ENCODE measurements at regions of chr6 and their contacts with region 1.

Region 1: DNA sequence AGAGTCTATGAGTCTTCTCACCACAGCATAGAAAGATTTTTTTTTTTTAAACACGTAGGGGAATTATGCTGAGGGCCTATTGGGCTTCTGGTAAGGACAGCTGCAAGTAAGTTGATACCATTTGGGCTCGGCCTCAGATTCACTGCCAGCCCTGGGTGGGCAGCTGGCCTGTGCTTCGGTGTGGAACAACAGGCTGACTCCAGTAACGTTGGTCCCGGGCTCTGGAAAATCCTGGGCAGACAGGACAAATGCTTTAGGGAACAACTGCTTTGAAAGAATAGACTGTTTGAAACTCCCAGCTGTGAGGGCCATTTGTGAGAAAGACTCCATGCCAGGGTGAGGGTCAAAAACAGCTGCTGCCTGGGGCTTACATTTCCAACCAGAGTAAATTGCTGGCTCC is 366.5 kb downstream of the QKI start:
- DNase-seq: no peak
- ATAC-seq: no peak
- H3K4me3 ChIP-seq: no peak overlapping the region
- H3K27ac ChIP-seq: no peak overlapping the region
- H3K4me1 ChIP-seq: peaks cover 9% of the 10 kb centered on the region
- H3K27me3 ChIP-seq: no peaks in the 10 kb centered on the region
- CTCF ChIP-seq: no peak
- EP300 ChIP-seq: no peak
- POLR2A ChIP-seq: no peak
- RAD21 ChIP-seq: no peak

Region 2: DNA sequence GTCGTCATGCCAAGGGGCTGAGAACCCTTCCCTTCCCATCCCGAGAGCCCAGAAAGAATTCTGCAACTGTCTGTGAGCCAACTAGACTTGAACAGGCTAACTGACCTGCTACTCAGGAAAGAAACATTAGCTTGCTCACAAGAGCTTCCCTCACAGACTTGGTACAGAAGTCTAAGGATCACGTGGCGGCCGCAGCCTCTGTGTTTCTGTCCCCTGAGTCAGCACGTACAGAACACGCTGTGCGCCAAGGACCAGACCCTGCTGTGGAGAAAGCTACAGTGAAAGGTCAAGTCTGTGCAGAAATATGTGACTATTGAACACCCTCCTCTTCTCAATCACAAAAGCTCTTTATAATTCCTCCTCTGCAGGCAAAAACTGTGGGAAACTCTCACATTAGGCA is 517.8 kb before region 1 on chr6:
- CTCF ChIA-PET with region 1: no interaction called
- POLR2A ChIA-PET with region 1: no interaction called
- RAD21 ChIA-PET with region 1: no interaction called
- SMC1A ChIA-PET with region 1: no interaction called
- in situ Hi-C with region 1: no loop called
- intact Hi-C with region 1: no loop called
- DNase-seq: no peak
- ATAC-seq: no peak
- H3K4me3 ChIP-seq: no peak overlapping the region
- H3K27ac ChIP-seq: no peak overlapping the region
- H3K4me1 ChIP-seq: no peaks in the 10 kb centered on the region
- H3K27me3 ChIP-seq: peaks cover 1 to 5% of the 10 kb centered on the region in 2 experiments; a peak in 1 of 4 replicates
- CTCF ChIP-seq: no peak
- EP300 ChIP-seq: no peak
- POLR2A ChIP-seq: no peak
- RAD21 ChIP-seq: no peak

Region 3: GRCh38 chr6:163738725-163739407 is 42.1 kb before region 1 on chr6:
- CTCF ChIA-PET with region 1: no interaction called
- POLR2A ChIA-PET with region 1: no interaction called
- RAD21 ChIA-PET with region 1: no interaction called
- SMC1A ChIA-PET with region 1: no interaction called
- in situ Hi-C with region 1: no loop called
- intact Hi-C with region 1: loop called (anchors 2 kb)
- DNase-seq: no peak
- ATAC-seq: peak; percentile 63
- H3K4me3 ChIP-seq: no peak overlapping the region
- H3K27ac ChIP-seq: no peak overlapping the region
- H3K4me1 ChIP-seq: peaks cover 12% of the 10 kb centered on the region
- H3K27me3 ChIP-seq: no peaks in the 10 kb centered on the region
- CTCF ChIP-seq: no peak
- EP300 ChIP-seq: no peak
- POLR2A ChIP-seq: no peak
- RAD21 ChIP-seq: no peak

Region 4: DNA sequence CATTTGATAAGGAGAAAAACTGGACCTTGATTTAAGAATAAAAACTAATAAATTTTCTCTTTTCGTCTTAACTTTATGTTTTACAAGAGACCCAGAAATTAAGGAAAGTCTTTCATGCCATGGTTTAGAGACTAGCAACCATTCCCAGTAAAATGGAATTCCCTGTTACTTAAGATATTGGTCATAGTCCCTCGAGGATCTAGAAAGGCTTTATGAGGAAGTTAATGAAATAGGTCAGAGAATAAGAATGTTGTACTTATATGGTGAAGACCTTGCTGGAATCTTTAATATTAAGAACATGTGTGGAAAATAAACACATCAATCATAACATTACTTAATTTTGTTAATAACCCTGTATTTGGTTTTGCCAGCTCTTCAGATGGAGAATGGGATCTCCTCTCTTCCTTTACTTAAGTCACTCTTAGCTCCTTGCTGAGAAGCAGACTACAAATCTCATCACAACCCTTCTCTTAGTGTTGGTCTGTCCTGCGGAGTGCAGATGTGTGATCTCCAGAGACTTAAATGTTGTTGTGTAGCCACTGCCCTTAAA is 16.4 kb after region 1 on chr6:
- CTCF ChIA-PET with region 1: no interaction called
- POLR2A ChIA-PET with region 1: no interaction called
- RAD21 ChIA-PET with region 1: no interaction called
- SMC1A ChIA-PET with region 1: no interaction called
- in situ Hi-C with region 1: no loop called
- intact Hi-C with region 1: no loop called
- DNase-seq: no peak
- ATAC-seq: no peak
- H3K4me3 ChIP-seq: no peak overlapping the region
- H3K27ac ChIP-seq: no peak overlapping the region
- H3K4me1 ChIP-seq: no peaks in the 10 kb centered on the region; the same call in 1 of the 2 replicates
- H3K27me3 ChIP-seq: no peaks in the 10 kb centered on the region
- CTCF ChIP-seq: no peak
- EP300 ChIP-seq: no peak
- POLR2A ChIP-seq: no peak
- RAD21 ChIP-seq: no peak

Region 5: GRCh38 chr6:163883984-163884383 is 103.0 kb after region 1 on chr6:
- CTCF ChIA-PET with region 1: no interaction called
- POLR2A ChIA-PET with region 1: no interaction called
- RAD21 ChIA-PET with region 1: no interaction called
- SMC1A ChIA-PET with region 1: no interaction called
- in situ Hi-C with region 1: no loop called
- intact Hi-C with region 1: no loop called
- DNase-seq: no peak
- ATAC-seq: no peak
- H3K4me3 ChIP-seq: no peak overlapping the region
- H3K27ac ChIP-seq: no peak overlapping the region
- H3K4me1 ChIP-seq: no peaks in the 10 kb centered on the region
- H3K27me3 ChIP-seq: no peaks in the 10 kb centered on the region
- CTCF ChIP-seq: no peak
- EP300 ChIP-seq: no peak
- POLR2A ChIP-seq: no peak
- RAD21 ChIP-seq: no peak

Measured in GM12878 (cell line).